H1 (cell line): ENCODE measurements at regions of chr6 and their contacts with region 1.

Region 1: DNA sequence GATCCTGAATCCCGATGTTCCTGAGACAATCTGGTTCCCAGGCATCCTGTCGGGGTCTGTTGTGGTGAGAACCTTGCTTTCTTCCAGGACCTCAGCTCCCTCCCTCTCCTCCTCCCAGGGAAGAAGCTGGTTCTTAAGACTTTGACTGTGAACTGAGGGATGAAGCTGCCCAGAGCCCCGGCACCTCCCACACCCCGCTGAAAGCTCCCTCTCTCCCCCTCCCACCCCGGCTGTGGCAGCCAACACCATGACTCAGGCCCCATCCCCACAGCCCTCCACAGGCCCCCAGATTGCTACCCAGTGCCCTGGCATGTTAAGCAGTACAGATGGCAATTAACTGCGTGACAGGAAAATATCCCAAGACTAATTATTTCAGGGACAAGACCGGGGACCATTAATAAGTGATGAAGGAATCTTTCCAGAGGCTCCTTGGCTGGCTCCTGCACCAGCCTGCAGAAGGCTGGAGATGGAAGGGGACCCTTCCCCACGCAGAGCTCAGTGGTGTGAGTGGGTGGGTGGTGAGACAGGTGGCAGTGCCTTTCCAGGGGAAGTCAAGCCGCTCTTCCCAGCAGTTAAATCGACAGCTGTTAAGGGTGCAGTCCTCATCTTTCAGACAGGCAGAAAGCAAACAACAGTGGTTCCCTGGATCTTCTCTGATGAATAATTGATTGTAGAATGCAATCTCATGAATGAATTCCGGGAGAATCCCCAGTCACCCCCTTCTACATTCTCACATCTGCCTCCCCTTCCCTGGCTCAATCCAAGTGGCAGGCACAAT is 237.9 kb downstream of the LRFN2 start:
- DNase-seq: no peak
- H3K4me3 ChIP-seq: no peak overlapping the region
- H3K27ac ChIP-seq: no peak overlapping the region
- H3K4me1 ChIP-seq: peaks cover 3 to 28% (median 20%) of the 10 kb centered on the region in 4 experiments
- H3K27me3 ChIP-seq: peaks cover 0 to 2% (median 0%) of the 10 kb centered on the region in 4 experiments; a peak in 1 of 7 replicates
- CTCF ChIP-seq: no peak
- EP300 ChIP-seq: no peak
- POLR2A ChIP-seq: no peak
- RAD21 ChIP-seq: no peak

Region 2: DNA sequence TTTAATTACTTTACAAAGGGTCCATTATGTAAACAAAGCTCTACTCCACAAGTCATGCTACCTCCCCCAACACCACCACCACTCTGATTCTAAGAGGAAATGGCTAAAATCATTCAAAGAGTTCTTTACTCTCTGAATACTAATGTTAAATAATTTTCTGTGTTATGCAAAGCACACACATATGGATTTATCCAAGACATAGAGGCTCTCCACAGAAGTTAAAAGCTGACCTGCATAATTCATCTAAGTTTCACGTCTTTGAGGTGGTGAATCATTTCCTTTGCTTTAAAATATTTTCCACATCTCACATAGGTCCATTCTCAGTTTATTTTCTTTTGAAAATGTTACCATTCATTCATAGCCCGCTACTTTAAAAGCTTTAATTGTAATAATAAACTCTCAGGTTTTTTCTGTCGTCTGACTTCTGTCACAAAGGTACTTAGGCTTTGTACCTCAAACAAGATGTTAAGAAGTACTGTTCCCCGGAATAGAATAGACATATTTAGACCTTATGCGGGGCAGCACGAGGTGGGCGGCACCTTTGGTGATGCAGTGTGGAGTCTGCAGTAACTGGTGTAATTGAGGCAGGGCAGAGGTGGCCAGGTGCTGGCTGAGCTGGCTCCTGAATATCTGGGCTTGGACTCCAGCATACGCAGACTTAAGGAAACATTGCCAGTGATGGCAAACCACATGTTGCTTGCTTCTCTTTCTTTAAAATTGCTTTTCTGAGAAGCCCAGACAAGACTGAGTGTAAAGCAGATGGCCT is 679.9 kb before region 1 on chr6:
- CTCF ChIA-PET with region 1: no interaction called
- POLR2A ChIA-PET with region 1: no interaction called
- DNase-seq: no peak
- H3K4me3 ChIP-seq: peak overlapping the region in 1 of 4 experiments; percentile 2; a peak in 1 of 8 replicates
- H3K27ac ChIP-seq: no peak overlapping the region
- H3K4me1 ChIP-seq: peaks cover 0 to 5% (median 1%) of the 10 kb centered on the region in 4 experiments; a peak in 4 of 7 replicates
- H3K27me3 ChIP-seq: no peaks in the 10 kb centered on the region
- CTCF ChIP-seq: no peak
- EP300 ChIP-seq: no peak
- POLR2A ChIP-seq: no peak
- RAD21 ChIP-seq: no peak

Region 3: GRCh38 chr6:40312213-40313015 is 36.9 kb before region 1 on chr6:
- CTCF ChIA-PET with region 1: no interaction called
- POLR2A ChIA-PET with region 1: no interaction called
- DNase-seq: no peak
- H3K4me3 ChIP-seq: no peak overlapping the region
- H3K27ac ChIP-seq: no peak overlapping the region
- H3K4me1 ChIP-seq: peaks cover 0 to 5% (median 1%) of the 10 kb centered on the region in 4 experiments; a peak in 2 of 7 replicates
- H3K27me3 ChIP-seq: no peaks in the 10 kb centered on the region
- CTCF ChIP-seq: no peak
- EP300 ChIP-seq: no peak
- POLR2A ChIP-seq: no peak
- RAD21 ChIP-seq: no peak

Region 4: GRCh38 chr6:40336940-40337760 is 12.2 kb before region 1 on chr6:
- CTCF ChIA-PET with region 1: interaction called, 88 read pairs
- POLR2A ChIA-PET with region 1: interaction called, 11 read pairs
- DNase-seq: no peak
- H3K4me3 ChIP-seq: no peak overlapping the region
- H3K27ac ChIP-seq: no peak overlapping the region
- H3K4me1 ChIP-seq: peaks cover 1 to 20% (median 10%) of the 10 kb centered on the region in 4 experiments; a peak in 5 of 7 replicates
- H3K27me3 ChIP-seq: no peaks in the 10 kb centered on the region; a peak in 1 of 7 replicates
- CTCF ChIP-seq: no peak
- EP300 ChIP-seq: no peak
- POLR2A ChIP-seq: no peak
- RAD21 ChIP-seq: no peak